Endothelial cell of umbilical vein (primary cell): ENCODE measurements at regions of chr22 and their contacts with region 1.

Region 1: GRCh38 chr22:45389521-45389920 is 23.9 kb downstream of the SMC1B start:
- DNase-seq: no peak
- H3K4me3 ChIP-seq: no peak overlapping the region
- H3K27ac ChIP-seq: no peak overlapping the region
- H3K4me1 ChIP-seq: no peaks in the 10 kb centered on the region
- H3K27me3 ChIP-seq: peaks cover 4 to 16% of the 10 kb centered on the region in 2 experiments
- CTCF ChIP-seq: no peak
- POLR2A ChIP-seq: no peak

Region 2: GRCh38 chr22:45399712-45400445 is 10.4 kb after region 1 on chr22:
- CTCF ChIA-PET with region 1: interaction called, 11 read pairs
- POLR2A ChIA-PET with region 1: no interaction called
- dilution Hi-C with region 1: no loop called
- intact Hi-C with region 1: no loop called
- DNase-seq: no peak
- H3K4me3 ChIP-seq: no peak overlapping the region
- H3K27ac ChIP-seq: no peak overlapping the region
- H3K4me1 ChIP-seq: no peaks in the 10 kb centered on the region
- H3K27me3 ChIP-seq: peaks cover 9 to 16% of the 10 kb centered on the region in 2 experiments
- CTCF ChIP-seq: no peak
- POLR2A ChIP-seq: no peak